Lower leg skin (tissue), 4 donors: ENCODE measurements at regions of chr16 and their contacts with region 1.

Region 1: GRCh38 chr16:30567991-30568638 is 3.4 kb downstream of the ZNF688 start:
- DNase-seq: no peak
- H3K4me3 ChIP-seq: no peak overlapping the region
- CTCF ChIP-seq: no peak
- POLR2A ChIP-seq: no peak

Region 2: GRCh38 chr16:30637942-30638341 is 69.8 kb after region 1 on chr16:
- intact Hi-C with region 1: loop called (anchors 10 kb)
- DNase-seq: no peak
- H3K4me3 ChIP-seq: no peak overlapping the region
- CTCF ChIP-seq: no peak
- POLR2A ChIP-seq: no peak